ENCODE measurements at regions of chr1 and their contacts with region 1.

Region 1: DNA sequence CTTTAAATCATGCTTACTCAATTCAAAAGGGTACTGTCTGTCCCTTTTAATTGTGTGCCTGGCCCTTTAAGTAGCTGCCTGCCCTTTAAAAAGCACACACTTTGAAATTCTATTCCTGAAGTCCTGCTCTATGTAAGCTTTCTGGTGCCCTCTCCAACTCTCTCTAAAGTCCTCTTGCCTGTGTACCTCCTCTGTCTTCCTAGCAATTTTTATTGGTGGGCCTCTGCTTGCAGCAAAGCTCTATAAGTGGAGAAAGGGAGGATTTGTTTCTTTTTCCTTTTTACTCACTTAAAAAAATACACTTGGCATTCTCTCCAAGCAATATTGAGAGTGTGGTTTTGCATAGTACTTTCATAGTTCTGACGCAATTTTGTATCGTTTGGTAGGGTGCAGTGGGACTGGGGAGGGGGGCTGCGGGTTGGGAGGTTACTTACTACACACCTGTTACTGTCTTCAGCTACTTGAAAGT is 135.4 kb downstream of the LMO4 start:
- DNase-seq: no peak
- H3K4me3 ChIP-seq: no peak overlapping the region
- H3K27ac ChIP-seq: no peak overlapping the region
- H3K4me1 ChIP-seq: no peaks in the 10 kb centered on the region
- H3K27me3 ChIP-seq: no peaks in the 10 kb centered on the region
- CTCF ChIP-seq: no peak

Region 2: DNA sequence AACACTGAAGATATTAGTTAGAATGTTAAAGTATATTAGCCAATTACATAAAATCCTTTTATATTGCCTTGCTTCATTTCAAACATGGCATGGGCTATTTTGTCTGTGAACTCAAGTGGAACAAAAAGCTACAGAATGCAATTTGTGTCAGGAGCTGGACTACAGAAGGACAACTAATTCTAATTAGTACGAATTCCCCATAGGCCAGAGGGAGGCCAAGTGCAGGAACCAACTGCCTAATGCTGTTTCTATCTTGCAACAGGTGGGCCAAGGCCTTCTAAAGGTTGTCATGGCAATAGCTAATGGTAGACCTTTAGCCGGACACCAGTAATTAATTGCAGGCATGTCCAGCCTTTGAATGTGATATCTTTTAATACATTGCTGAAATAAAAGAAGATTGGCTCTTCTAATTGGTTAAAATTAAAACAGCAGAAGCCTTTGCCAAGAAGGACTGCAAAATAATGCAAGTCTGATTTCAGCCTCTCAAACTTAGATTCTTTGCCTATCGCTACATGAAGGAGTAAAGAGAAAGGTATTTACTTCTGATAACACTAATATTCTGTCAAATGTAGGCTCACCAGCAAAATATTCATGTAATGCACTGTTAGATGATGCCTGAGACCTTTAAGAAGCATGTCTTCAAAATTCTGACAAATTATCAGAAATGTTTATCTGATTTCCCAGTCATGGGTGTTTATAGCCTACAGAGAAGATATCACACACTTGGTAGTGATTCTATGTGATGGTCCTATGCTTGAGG is 96.7 kb after region 1 on chr1:
- CTCF ChIA-PET with region 1: no interaction called
- POLR2A ChIA-PET with region 1: interaction called, 12 read pairs
- intact Hi-C with region 1: no loop called
- DNase-seq: no peak
- H3K4me3 ChIP-seq: no peak overlapping the region
- H3K27ac ChIP-seq: no peak overlapping the region
- H3K4me1 ChIP-seq: no peaks in the 10 kb centered on the region
- H3K27me3 ChIP-seq: no peaks in the 10 kb centered on the region
- CTCF ChIP-seq: no peak

Region 3: GRCh38 chr1:87898431-87898830 is 434.4 kb after region 1 on chr1:
- CTCF ChIA-PET with region 1: no interaction called
- POLR2A ChIA-PET with region 1: interaction called, 16 read pairs
- intact Hi-C with region 1: no loop called
- DNase-seq: no peak
- H3K4me3 ChIP-seq: no peak overlapping the region
- H3K27ac ChIP-seq: no peak overlapping the region
- H3K4me1 ChIP-seq: no peaks in the 10 kb centered on the region
- H3K27me3 ChIP-seq: no peaks in the 10 kb centered on the region
- CTCF ChIP-seq: no peak